CD14-positive monocyte (primary cell): ENCODE measurements at regions of chr5 and their contacts with region 1.

Region 1: GRCh38 chr5:157449011-157449723 is 10.8 kb upstream of the NIPAL4 start:
- DNase-seq: no peak
- H3K4me3 ChIP-seq: no peak overlapping the region
- H3K4me3 Mint-ChIP-seq: no peak overlapping the region
- H3K27ac ChIP-seq: no peak overlapping the region
- H3K27ac Mint-ChIP-seq: no peak overlapping the region
- H3K4me1 ChIP-seq: no peaks in the 10 kb centered on the region
- H3K4me1 Mint-ChIP-seq: peaks cover 3% of the 10 kb centered on the region
- H3K27me3 ChIP-seq: no peaks in the 10 kb centered on the region
- H3K27me3 Mint-ChIP-seq: peaks cover 5 to 10% (median 7%) of the 10 kb centered on the region in 3 donors
- CTCF ChIP-seq: no peak

Region 2: GRCh38 chr5:157718519-157718918 is 269.4 kb after region 1 on chr5:
- intact Hi-C with region 1: loop called in 1 of 2 experiments (anchors 10 kb)
- DNase-seq: peak; percentile 32 to 50 (median 41)
- H3K4me3 ChIP-seq: no peak overlapping the region
- H3K4me3 Mint-ChIP-seq: no peak overlapping the region
- H3K27ac ChIP-seq: no peak overlapping the region
- H3K27ac Mint-ChIP-seq: peak overlapping the region in 1 of 7 donors; percentile 84
- H3K4me1 ChIP-seq: no peaks in the 10 kb centered on the region
- H3K4me1 Mint-ChIP-seq: peaks cover 4% of the 10 kb centered on the region
- H3K27me3 ChIP-seq: no peaks in the 10 kb centered on the region
- H3K27me3 Mint-ChIP-seq: peaks cover 0 to 2% (median 0%) of the 10 kb centered on the region in 3 donors
- CTCF ChIP-seq: peak; percentile 70